ENCODE measurements at regions of chr15 and their contacts with region 1.

Region 1: GRCh38 chr15:90233376-90234095 is at the start of gene CIB1:
- DNase-seq: peak; percentile 99
- ATAC-seq: peak; percentile 82
- H3K4me3 Mint-ChIP-seq: peak within 1 kb of the TSS; percentile 99
- H3K27ac Mint-ChIP-seq: peak within 1 kb of the TSS; percentile 97
- H3K4me1 Mint-ChIP-seq: peaks cover 46% of the 10 kb centered on the region
- H3K27me3 Mint-ChIP-seq: no peaks in the 10 kb centered on the region
- total RNA-seq, gene CIB1: 135 to 140 TPM

Region 2: DNA sequence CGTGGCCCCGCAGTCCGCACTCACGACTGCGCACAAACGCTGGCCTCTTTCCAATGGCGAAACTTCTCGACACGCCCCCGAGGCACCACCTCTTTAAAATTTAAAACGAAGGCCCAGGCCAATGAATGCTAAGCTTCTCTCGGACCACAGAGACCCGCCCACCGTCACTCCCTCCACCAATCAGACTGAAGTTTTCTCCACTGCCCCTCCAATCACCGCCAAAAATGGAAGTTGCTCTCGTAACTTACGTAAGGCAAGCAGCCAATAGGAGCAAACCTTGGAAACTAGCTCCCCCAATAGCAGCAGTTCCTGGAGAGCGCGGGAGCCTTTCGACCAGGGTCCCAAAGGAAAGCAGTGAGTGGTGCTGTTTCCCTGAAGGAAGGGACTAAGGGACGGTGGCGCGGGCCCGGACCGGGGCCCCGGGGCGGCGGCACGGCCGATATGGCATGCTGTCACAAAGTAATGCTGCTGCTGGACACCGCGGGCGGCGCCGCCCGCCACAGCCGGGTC is 658.3 kb before region 1 on chr15 and contains the start of gene TICRR:
- CTCF ChIA-PET with region 1: no interaction called
- POLR2A ChIA-PET with region 1: no interaction called
- intact Hi-C with region 1: loop called in 1 of 2 experiments (anchors 2 kb)
- DNase-seq: peak; percentile 96
- ATAC-seq: peak; percentile 99
- H3K4me3 Mint-ChIP-seq: peak within 1 kb of the TSS; percentile 89
- H3K27ac Mint-ChIP-seq: peak within 1 kb of the TSS; percentile 72
- H3K4me1 Mint-ChIP-seq: peaks cover 26% of the 10 kb centered on the region
- H3K27me3 Mint-ChIP-seq: peaks cover 5% of the 10 kb centered on the region
- total RNA-seq, gene TICRR: 25.7 to 28.9 TPM

Region 3: DNA sequence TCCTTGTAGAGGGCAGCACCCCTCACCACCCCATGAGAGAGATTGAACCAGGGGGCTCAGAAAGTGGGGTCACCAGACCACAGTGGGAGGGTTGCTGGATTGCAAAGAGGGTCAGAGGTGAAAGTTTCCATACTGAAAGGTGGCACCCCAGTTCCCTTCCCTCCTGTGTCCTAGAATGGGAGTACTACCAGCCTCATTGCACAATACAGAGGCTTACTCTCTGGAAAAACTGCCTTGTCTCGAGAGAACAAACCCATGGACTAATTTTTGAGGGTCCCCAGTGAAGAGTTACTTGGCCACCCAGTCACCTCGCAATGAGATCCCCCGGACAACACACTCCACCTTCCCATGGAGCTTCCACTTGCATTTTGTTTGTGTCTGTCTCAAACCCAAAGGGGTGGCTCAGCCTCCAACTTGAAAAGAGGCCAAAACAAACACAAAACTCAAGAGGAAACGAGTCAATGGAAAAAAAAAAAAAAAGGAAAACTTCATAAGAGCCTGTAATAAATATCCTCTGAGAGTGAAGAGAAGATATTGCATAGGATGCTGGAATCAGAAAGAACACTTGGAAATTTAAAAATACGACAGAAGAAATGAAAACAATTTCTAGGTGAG is 438.8 kb before region 1 on chr15:
- CTCF ChIA-PET with region 1: no interaction called
- POLR2A ChIA-PET with region 1: no interaction called
- intact Hi-C with region 1: no loop called
- DNase-seq: no peak
- ATAC-seq: no peak
- H3K4me3 Mint-ChIP-seq: no peak overlapping the region
- H3K27ac Mint-ChIP-seq: no peak overlapping the region
- H3K4me1 Mint-ChIP-seq: no peaks in the 10 kb centered on the region
- H3K27me3 Mint-ChIP-seq: peaks cover 2% of the 10 kb centered on the region

Region 4: DNA sequence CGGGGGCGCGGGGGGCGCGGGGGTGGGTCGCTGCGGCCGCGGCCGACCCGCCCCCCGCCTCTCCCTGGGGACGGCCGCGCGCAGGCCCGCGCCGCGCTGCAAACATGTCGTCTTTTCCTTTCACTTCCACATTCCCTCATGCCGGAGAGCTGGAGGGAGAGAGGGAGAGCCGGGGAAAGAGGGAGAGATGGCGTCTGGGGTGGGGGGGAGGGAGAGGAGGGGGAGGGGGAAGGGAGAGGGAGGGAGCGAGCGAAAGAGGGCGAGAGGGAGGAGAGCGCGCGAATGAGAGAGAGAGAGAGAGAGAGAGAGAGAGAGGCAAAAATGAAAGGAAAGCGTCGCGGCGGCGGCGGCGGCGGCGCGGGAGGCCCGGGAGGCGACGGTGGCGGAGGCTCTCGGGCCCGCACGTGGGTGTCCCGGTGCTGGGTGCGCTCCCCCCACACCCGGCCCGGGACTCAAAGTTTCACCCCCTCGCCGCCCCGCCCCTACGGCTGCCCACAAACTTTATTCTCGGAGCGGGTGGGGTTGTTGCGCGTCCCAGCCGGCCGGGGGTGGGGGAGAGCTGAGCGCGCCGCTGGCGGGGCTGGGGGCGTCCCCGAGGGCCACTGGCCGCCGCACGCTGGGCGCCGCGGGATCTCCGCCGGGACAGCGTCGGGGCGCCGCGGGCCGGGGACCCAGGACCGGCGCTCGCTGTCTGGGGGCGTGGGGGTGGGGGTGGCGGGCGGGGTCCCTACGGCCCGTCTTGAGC is 231.7 kb before region 1 on chr15:
- CTCF ChIA-PET with region 1: interaction called, 3 read pairs
- POLR2A ChIA-PET with region 1: no interaction called
- intact Hi-C with region 1: loop called in 1 of 2 experiments (anchors 5 kb)
- DNase-seq: peak; percentile 77
- ATAC-seq: peak; percentile 27
- H3K4me3 Mint-ChIP-seq: peak overlapping the region; percentile 82
- H3K27ac Mint-ChIP-seq: peak overlapping the region; percentile 88
- H3K4me1 Mint-ChIP-seq: peaks cover 61% of the 10 kb centered on the region
- H3K27me3 Mint-ChIP-seq: no peaks in the 10 kb centered on the region

Region 5: GRCh38 chr15:90143166-90143655 is 90.3 kb before region 1 on chr15:
- CTCF ChIA-PET with region 1: interaction called, 13 read pairs
- POLR2A ChIA-PET with region 1: interaction called, 3 read pairs
- intact Hi-C with region 1: loop called in 1 of 2 experiments (anchors 1 kb)
- DNase-seq: peak; percentile 90
- ATAC-seq: peak; percentile 92
- H3K4me3 Mint-ChIP-seq: peak overlapping the region; percentile 20
- H3K27ac Mint-ChIP-seq: peak overlapping the region; percentile 83
- H3K4me1 Mint-ChIP-seq: peaks cover 38% of the 10 kb centered on the region
- H3K27me3 Mint-ChIP-seq: no peaks in the 10 kb centered on the region

Region 6: GRCh38 chr15:90174140-90174875 is 59.2 kb before region 1 on chr15:
- CTCF ChIA-PET with region 1: no interaction called
- POLR2A ChIA-PET with region 1: no interaction called
- intact Hi-C with region 1: no loop called
- DNase-seq: no peak
- ATAC-seq: no peak
- H3K4me3 Mint-ChIP-seq: no peak overlapping the region
- H3K27ac Mint-ChIP-seq: no peak overlapping the region
- H3K4me1 Mint-ChIP-seq: peaks cover 3% of the 10 kb centered on the region
- H3K27me3 Mint-ChIP-seq: no peaks in the 10 kb centered on the region

Region 7: GRCh38 chr15:90201130-90201949 is 32.2 kb before region 1 on chr15 and contains the start of gene SEMA4B:
- CTCF ChIA-PET with region 1: interaction called, 9 read pairs
- POLR2A ChIA-PET with region 1: interaction called, 4 read pairs
- intact Hi-C with region 1: loop called (anchors 1 to 2 kb)
- DNase-seq: peak; percentile 81
- ATAC-seq: peak; percentile 93
- H3K4me3 Mint-ChIP-seq: peak within 1 kb of the TSS; percentile 78
- H3K27ac Mint-ChIP-seq: peak within 1 kb of the TSS; percentile 77
- H3K4me1 Mint-ChIP-seq: peaks cover 9% of the 10 kb centered on the region
- H3K27me3 Mint-ChIP-seq: no peaks in the 10 kb centered on the region
- total RNA-seq, gene SEMA4B: 12.5 to 15.8 TPM

Region 8: DNA sequence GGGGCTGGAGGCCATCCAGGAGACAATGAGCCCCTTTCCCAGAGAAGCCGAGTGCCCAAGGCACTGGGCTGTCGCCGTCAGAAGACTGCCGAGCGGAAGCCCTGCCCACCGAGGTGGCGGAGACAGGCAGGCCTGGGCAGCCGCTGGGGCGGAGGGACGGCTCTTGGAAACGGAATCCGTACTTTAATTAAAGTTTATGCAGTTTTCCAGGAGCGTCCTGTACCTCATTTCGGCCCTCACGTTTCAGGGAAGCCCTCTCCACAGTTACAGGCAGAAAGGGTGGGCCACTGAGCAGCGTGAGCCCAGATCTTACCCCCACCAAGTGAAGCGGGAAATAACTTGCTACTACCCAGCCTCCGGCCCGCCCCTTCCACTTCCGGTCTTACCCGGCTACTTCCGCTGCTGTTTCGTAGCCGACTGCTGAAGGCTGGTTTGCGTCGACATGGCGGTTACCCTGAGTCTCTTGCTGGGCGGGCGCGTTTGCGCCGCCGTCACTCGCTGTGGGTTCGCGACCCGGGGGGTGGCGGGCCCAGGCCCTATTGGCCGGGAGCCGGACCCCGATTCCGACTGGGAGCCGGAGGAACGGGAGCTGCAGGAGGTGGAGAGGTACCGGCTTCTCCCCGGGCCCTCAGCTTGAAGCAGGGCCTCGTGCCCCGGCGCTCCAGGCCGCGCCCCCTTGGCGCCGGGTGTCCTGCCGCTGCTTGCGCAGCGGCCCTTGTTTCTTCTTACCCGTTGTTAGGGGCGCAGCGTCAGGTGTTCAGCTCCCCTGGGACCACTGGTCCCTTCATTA is 31.9 kb after region 1 on chr15 and contains the start of gene NGRN:
- CTCF ChIA-PET with region 1: interaction called, 5 read pairs
- POLR2A ChIA-PET with region 1: interaction called, 3 read pairs
- intact Hi-C with region 1: loop called (anchors 1 kb)
- DNase-seq: peak; percentile 95
- ATAC-seq: peak; percentile 87
- H3K4me3 Mint-ChIP-seq: peak within 1 kb of the TSS; percentile 98
- H3K27ac Mint-ChIP-seq: peak within 1 kb of the TSS; percentile 99
- H3K4me1 Mint-ChIP-seq: peaks cover 37% of the 10 kb centered on the region
- H3K27me3 Mint-ChIP-seq: no peaks in the 10 kb centered on the region
- total RNA-seq, gene NGRN: 22.0 to 23.9 TPM

Region 9: DNA sequence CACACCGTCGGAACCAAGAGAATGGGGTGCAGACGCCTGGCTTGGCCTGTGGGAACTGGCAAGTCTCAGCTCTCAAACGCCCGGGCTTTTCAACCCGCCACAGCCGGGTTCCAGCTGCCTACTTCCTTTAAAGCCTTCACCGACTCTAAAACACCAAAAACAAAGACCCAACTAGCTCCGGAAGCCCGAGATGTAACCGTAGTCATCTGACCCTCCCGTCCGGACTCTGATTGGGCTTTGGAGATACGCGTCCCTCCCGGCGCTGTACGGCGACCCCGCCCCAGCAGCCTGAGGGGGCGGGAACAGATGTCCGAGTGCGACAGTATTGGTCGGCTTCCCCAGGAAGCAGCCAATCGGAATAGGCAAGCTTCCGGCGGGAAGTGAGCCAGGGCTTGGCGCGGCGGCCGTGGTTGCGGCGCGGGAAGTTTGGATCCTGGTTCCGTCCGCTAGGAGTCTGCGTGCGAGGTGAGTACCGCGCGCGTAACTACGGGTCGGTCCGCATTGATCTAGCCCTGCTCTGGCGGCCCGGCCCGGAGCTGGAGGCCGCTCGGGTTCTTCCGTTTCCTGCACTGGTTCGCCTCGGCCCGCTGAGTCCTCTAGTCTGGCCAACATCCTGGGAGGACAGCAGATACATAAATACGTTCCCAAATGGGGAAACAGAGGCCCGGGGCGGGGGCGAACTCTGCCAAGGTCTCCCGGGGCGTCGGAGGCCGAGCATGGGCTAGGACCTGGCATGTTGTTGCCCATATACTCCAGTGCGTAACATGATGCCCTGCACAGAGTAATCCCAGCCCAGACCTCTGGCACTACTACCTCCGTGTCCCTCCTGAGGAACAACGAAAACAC is 483.7 kb after region 1 on chr15 and contains the start of gene BLM:
- CTCF ChIA-PET with region 1: no interaction called
- POLR2A ChIA-PET with region 1: no interaction called
- intact Hi-C with region 1: loop called in 1 of 2 experiments (anchors 1 kb)
- DNase-seq: peak; percentile 96
- ATAC-seq: peak; percentile 100
- H3K4me3 Mint-ChIP-seq: peak within 1 kb of the TSS; percentile 80
- H3K27ac Mint-ChIP-seq: peak within 1 kb of the TSS; percentile 83
- H3K4me1 Mint-ChIP-seq: peaks cover 17% of the 10 kb centered on the region
- H3K27me3 Mint-ChIP-seq: no peaks in the 10 kb centered on the region
- total RNA-seq, gene BLM: 59.5 to 73.7 TPM

Region 10: DNA sequence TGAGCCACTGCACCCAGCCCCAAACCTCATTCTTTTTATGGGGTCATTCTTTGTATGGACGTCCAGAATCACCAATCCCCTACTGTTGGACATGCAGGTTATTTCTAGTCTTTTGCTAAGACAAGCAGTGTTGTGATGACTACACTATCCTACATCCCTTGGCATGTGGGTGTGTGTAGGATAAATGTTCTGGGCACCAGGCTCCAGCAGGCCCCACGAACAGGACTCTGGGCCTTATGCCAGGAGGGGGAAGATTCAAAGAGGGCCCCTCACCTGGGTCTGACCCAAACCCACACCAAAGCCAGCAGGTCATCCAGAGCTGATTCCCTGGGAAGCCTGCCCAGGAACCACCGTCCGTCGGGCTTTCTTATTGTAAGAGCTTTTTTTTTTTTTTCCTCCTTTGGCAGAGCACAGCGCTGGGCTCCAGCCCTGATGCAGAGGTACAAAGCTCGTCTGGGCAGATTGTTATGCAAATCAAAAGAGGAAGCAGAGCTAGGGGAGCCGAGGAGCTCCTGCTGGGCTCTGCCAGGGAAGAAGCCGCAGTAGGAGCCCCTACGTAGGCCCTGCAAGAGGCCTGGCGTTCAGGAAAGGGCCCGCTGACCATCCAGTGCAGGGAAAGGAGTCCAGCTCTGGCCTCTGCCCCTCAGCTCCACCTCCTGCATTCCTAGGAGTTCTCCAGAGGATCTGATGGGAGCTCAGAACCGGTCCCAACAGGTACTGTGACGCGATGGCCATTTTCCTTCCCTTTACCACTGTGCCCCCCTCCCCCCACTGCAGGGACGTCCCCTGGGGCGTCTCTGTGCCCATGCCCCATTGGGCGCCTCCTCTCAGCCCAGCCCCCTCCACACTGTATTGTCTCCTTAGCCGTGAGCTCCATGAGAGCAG is 605.9 kb after region 1 on chr15:
- CTCF ChIA-PET with region 1: no interaction called
- POLR2A ChIA-PET with region 1: no interaction called
- intact Hi-C with region 1: no loop called
- DNase-seq: peak; percentile 75
- ATAC-seq: peak; percentile 34
- H3K4me3 Mint-ChIP-seq: peak overlapping the region; percentile 80
- H3K27ac Mint-ChIP-seq: peak overlapping the region; percentile 92
- H3K4me1 Mint-ChIP-seq: peaks cover 63% of the 10 kb centered on the region
- H3K27me3 Mint-ChIP-seq: no peaks in the 10 kb centered on the region

Region 11: GRCh38 chr15:90862964-90863778 is 629.6 kb after region 1 on chr15:
- CTCF ChIA-PET with region 1: no interaction called
- POLR2A ChIA-PET with region 1: no interaction called
- intact Hi-C with region 1: no loop called
- DNase-seq: no peak
- ATAC-seq: no peak
- H3K4me3 Mint-ChIP-seq: no peak overlapping the region
- H3K27ac Mint-ChIP-seq: peak overlapping the region; percentile 85
- H3K4me1 Mint-ChIP-seq: peaks cover 48% of the 10 kb centered on the region
- H3K27me3 Mint-ChIP-seq: peaks cover 5% of the 10 kb centered on the region